Endothelial cell of umbilical vein (primary cell): ENCODE measurements at regions of chr2 and their contacts with region 1.

Region 1: DNA sequence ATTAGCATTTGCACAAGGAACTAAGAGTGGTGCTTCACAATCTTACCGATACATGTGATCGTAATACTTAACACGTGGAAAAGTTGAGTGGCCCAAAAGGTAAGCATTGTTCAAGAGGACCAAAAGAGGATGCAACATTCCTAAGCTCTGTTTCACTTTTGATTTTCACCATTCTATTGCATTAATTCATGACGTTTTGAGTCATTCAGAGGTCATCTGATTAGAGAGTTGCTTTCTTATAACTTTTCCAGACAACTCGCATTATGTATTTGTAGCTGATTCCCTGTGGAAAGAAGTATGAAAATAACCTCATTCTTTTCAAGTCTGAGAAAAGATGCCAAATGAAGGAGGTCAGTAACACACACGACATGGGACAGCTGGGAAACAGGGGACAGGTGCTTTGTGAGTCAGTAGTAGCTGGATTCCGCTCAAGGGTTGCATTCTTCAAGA is 344.4 kb downstream of the RND3 start:
- DNase-seq: peak; percentile 85
- H3K4me3 ChIP-seq: no peak overlapping the region
- H3K27ac ChIP-seq: peak overlapping the region; percentile 99
- H3K4me1 ChIP-seq: peaks cover 48% of the 10 kb centered on the region
- H3K27me3 ChIP-seq: no peaks in the 10 kb centered on the region
- CTCF ChIP-seq: no peak
- POLR2A ChIP-seq: no peak

Region 2: GRCh38 chr2:149648282-149649030 is 494.7 kb before region 1 on chr2:
- CTCF ChIA-PET with region 1: interaction called, 22 read pairs
- POLR2A ChIA-PET with region 1: no interaction called
- dilution Hi-C with region 1: no loop called
- intact Hi-C with region 1: loop called (anchors 5 kb)
- DNase-seq: peak; percentile 91
- H3K4me3 ChIP-seq: no peak overlapping the region
- H3K27ac ChIP-seq: peak overlapping the region; percentile 70
- H3K4me1 ChIP-seq: peaks cover 23% of the 10 kb centered on the region
- H3K27me3 ChIP-seq: no peaks in the 10 kb centered on the region
- CTCF ChIP-seq: no peak
- POLR2A ChIP-seq: no peak

Region 3: DNA sequence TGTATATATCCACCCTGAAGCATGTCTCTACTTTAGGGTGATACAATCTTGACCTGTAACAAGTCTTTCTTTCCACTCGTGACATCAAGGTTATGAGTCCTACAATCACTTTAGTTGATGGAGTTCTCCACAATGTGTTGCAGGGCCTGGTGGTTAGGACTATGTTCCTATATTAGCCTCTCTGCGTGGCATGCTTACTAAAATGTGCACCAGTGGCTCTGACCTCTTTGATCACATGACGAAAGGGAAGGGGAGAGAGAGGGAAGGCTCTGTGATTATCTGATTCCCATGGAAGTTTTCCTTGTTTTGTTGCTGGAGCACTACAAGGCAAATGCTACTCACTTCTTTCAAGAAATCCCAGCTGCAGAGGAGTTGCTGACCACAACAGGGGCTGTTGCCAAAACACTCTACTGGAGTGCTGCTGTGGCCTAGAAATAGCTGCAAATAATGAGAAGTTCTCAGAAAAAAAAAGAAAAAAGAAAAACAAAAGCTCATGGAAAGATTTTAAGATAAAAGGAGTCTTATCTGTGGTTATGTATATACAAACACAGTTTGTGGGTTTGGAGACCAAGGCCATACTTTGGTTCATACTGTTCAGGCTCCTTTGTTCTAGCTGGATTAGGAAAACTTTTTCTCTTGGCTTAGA is 282.7 kb before region 1 on chr2:
- CTCF ChIA-PET with region 1: no interaction called
- POLR2A ChIA-PET with region 1: no interaction called
- dilution Hi-C with region 1: no loop called
- intact Hi-C with region 1: loop called (anchors 5 kb)
- DNase-seq: peak; percentile 75
- H3K4me3 ChIP-seq: no peak overlapping the region
- H3K27ac ChIP-seq: peak overlapping the region; percentile 11
- H3K4me1 ChIP-seq: peaks cover 36% of the 10 kb centered on the region
- H3K27me3 ChIP-seq: no peaks in the 10 kb centered on the region
- CTCF ChIP-seq: no peak
- POLR2A ChIP-seq: no peak

Region 4: GRCh38 chr2:150081775-150082481 is 61.2 kb before region 1 on chr2:
- CTCF ChIA-PET with region 1: interaction called, 4 read pairs
- POLR2A ChIA-PET with region 1: no interaction called
- dilution Hi-C with region 1: no loop called
- intact Hi-C with region 1: loop called (anchors 2 kb)
- DNase-seq: peak; percentile 61
- H3K4me3 ChIP-seq: no peak overlapping the region
- H3K27ac ChIP-seq: peak overlapping the region; percentile 55
- H3K4me1 ChIP-seq: peaks cover 27% of the 10 kb centered on the region
- H3K27me3 ChIP-seq: no peaks in the 10 kb centered on the region
- CTCF ChIP-seq: no peak
- POLR2A ChIP-seq: no peak

Region 5: GRCh38 chr2:150296770-150297546 is 153.8 kb after region 1 on chr2:
- CTCF ChIA-PET with region 1: no interaction called
- POLR2A ChIA-PET with region 1: no interaction called
- dilution Hi-C with region 1: no loop called
- intact Hi-C with region 1: loop called (anchors 1 kb)
- DNase-seq: peak; percentile 92
- H3K4me3 ChIP-seq: no peak overlapping the region
- H3K27ac ChIP-seq: peak overlapping the region; percentile 81
- H3K4me1 ChIP-seq: peaks cover 17% of the 10 kb centered on the region
- H3K27me3 ChIP-seq: no peaks in the 10 kb centered on the region
- CTCF ChIP-seq: no peak
- POLR2A ChIP-seq: no peak

Region 6: DNA sequence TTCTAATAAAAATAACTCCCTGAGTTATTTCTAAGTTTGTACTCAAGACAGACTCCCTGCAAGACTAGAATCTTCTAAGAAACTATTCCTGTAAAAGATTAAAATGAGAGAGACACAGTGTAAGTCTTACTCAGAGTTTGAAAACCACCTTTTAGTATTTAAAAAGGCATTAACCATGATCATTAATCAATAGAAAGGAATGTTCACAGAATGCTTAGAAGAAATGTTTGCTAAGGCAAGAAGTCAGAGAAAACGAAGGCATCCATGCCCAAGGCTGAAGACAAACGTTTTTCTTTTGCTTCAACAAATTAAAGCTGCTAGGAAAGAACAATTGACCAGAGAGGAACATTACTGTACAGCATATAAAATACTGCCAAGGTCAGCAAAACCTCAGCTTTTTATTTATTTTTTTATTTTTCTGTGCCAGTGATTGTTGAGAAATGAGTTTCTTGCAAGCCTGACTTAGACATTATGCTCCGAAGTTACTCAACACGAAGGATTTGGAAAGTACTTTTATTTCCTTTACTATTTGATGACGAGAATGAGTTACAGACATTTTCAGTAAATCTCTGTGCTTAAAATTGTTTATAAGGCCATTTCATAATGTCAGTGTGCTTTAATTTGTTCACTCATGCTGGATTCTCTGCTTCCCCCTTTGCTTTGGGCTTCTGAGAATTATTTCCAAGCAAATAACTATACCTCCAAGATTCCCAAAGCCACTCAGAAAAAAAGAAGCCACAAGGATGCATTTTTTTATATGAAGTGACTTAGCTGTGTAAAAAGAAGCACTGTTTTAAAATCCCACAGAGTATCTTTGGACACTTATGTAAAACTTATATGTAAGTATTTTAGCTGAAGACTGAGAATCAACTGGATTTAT is 323.9 kb after region 1 on chr2:
- CTCF ChIA-PET with region 1: interaction called, 4 read pairs
- POLR2A ChIA-PET with region 1: interaction called, 5 read pairs
- dilution Hi-C with region 1: no loop called
- intact Hi-C with region 1: loop called (anchors 1 kb)
- DNase-seq: peak; percentile 59
- H3K4me3 ChIP-seq: no peak overlapping the region
- H3K27ac ChIP-seq: peak overlapping the region; percentile 96
- H3K4me1 ChIP-seq: peaks cover 90% of the 10 kb centered on the region
- H3K27me3 ChIP-seq: no peaks in the 10 kb centered on the region
- CTCF ChIP-seq: no peak
- POLR2A ChIP-seq: peak; percentile 60

Region 7: DNA sequence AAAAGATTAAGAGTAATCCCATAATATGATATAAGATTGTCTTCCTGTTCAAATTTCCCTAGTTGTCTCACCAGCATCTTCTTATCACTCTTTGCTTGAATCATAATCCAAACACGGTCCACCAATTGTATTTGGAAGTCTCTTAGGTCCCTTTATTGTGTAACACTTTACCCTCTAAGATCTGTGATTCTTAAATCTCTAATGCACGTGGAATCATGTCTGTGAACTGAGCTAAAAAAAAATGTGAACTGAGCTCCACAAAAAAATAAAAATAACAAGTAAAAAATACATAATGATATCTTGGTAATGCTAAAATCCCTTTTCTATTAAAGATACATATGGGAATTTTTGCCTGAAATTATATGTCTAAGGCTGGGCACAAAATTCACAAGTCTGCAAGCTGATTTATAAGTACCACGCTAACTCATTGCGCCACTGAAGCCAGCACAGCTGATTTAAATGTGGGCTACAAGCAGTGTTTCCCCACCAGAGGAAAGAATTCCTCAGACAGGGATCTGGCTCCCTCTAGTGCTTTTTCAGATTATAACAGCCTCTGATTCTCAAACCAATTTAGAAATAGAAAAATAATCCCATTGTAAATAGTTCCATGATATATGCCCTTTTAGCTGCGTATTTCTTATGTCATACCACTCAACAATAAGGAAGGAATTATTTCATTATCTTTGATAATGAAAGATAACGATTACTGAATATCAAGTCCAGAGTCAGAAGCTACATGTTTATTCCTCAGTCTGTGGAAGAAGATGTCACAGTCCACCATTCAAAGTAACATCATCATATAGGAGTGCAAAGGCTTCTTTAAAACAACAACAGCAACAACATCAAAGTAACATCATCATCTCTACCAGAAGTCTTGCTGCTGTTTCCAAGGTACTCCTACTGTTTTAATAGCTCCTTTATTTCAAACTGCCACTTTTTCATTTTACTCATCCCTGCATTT is 1095.7 kb after region 1 on chr2:
- CTCF ChIA-PET with region 1: interaction called, 6 read pairs
- POLR2A ChIA-PET with region 1: no interaction called
- dilution Hi-C with region 1: no loop called
- intact Hi-C with region 1: loop called (anchors 5 kb)
- DNase-seq: peak; percentile 80
- H3K4me3 ChIP-seq: no peak overlapping the region
- H3K27ac ChIP-seq: no peak overlapping the region
- H3K4me1 ChIP-seq: peaks cover 7% of the 10 kb centered on the region
- H3K27me3 ChIP-seq: no peaks in the 10 kb centered on the region
- CTCF ChIP-seq: peak; percentile 53 to 57
- POLR2A ChIP-seq: no peak